ENCODE measurements at regions of chr17 and their contacts with region 1.

Region 1: GRCh38 chr17:927611-928461 is 51.7 kb downstream of the NXN start:
- DNase-seq: no peak
- H3K4me3 ChIP-seq: 0 out of 8 replicates have a peak overlapping the region, but pooled peaks of 1 of the 4 experiments have one; percentile 1
- H3K27ac ChIP-seq: peak overlapping the region; percentile 25; the same call in 1 of the 2 replicates
- H3K4me1 ChIP-seq: peaks cover 10 to 22% (median 17%) of the 10 kb centered on the region in 4 experiments
- H3K27me3 ChIP-seq: no peaks in the 10 kb centered on the region
- CTCF ChIP-seq: no peak
- EP300 ChIP-seq: no peak
- POLR2A ChIP-seq: no peak
- RAD21 ChIP-seq: no peak

Region 2: GRCh38 chr17:860805-861204 is 67.0 kb before region 1 on chr17:
- CTCF ChIA-PET with region 1: no interaction called
- POLR2A ChIA-PET with region 1: no interaction called
- DNase-seq: no peak
- H3K4me3 ChIP-seq: no peak overlapping the region
- H3K27ac ChIP-seq: no peak overlapping the region
- H3K4me1 ChIP-seq: no peaks in the 10 kb centered on the region; a peak in 1 of 7 replicates
- H3K27me3 ChIP-seq: no peaks in the 10 kb centered on the region
- CTCF ChIP-seq: no peak
- EP300 ChIP-seq: no peak
- POLR2A ChIP-seq: no peak
- RAD21 ChIP-seq: no peak

Region 3: GRCh38 chr17:915538-916201 is 12.2 kb before region 1 on chr17:
- CTCF ChIA-PET with region 1: interaction called, 22 read pairs
- POLR2A ChIA-PET with region 1: interaction called, 3 read pairs
- DNase-seq: no peak
- H3K4me3 ChIP-seq: no peak overlapping the region
- H3K27ac ChIP-seq: no peak overlapping the region
- H3K4me1 ChIP-seq: peaks cover 2 to 15% (median 4%) of the 10 kb centered on the region in 4 experiments; a peak in 5 of 7 replicates
- H3K27me3 ChIP-seq: no peaks in the 10 kb centered on the region
- CTCF ChIP-seq: no peak
- EP300 ChIP-seq: no peak
- POLR2A ChIP-seq: no peak
- RAD21 ChIP-seq: no peak

Region 4: DNA sequence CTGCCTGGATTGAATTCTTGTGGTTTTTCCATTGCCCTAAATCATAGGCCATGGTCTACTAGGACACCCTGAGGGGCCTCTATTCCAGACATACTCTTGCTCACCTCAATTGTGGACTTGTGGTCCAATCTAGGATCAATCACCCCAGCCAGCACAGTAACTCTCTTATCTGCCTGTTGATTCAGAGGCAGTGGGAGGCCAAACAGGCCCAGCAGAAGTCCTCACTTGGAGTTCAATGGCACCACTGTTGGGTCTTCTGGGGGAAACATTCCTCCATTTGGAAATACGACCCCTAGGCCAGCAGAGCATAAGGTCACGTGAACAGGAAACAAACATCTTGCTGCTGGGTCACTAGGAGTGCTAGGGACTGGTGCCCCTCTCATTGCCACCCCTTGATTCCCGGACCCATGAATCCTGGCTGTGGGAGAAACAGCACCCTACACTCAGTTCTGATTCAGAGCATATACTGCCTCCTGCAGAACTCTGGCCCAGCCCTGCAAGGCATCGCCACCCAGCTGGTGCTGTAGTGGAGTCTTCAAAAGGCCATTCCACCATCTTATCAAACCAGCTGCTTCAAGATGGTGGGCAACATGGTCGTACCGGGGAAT is 58.6 kb after region 1 on chr17:
- CTCF ChIA-PET with region 1: no interaction called
- POLR2A ChIA-PET with region 1: no interaction called
- DNase-seq: no peak
- H3K4me3 ChIP-seq: no peak overlapping the region
- H3K27ac ChIP-seq: no peak overlapping the region
- H3K4me1 ChIP-seq: no peaks in the 10 kb centered on the region
- H3K27me3 ChIP-seq: no peaks in the 10 kb centered on the region
- CTCF ChIP-seq: no peak
- EP300 ChIP-seq: no peak
- POLR2A ChIP-seq: no peak
- RAD21 ChIP-seq: no peak

Region 5: DNA sequence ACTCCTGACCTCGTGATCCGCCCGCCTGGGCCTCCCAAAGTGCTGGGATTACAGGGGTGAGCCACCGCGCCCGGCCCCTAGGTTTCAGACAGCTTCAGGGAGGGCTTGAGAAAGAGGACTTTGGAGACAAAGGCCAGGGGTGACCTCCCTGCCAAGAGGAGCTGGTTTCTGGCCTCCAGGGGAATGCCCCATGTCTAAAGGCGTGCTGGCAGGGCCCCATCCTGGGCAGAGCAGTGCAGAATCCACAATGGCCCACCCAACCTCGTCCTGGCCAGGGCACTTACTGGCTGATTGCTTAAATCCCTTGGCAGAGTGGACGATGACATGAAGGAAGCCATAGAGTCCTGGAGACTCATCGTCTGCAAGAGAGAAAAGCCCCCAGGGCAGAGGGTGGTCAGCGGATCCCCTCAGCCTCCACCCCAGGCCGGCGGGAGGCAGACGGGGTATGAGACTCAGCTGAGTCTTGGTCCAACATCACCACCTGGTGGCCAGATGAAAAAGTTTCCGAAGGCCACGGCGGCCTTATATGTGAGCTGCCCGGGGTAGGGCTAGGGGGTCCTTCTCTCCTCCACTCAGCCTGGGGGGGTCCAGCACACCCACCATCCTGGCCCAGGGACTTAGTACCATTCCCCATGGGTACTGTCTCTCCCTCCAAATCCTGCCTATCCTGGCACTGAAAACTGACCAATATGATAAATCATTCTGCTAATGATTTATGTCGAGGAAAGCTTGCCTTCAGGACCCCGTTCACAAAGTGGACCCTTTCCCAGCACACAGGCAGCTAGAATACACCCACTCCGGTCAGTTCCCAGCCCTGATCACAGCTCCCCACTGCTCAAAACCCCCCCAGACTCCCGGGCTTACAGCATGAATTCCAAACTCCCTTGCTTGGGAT is 128.2 kb after region 1 on chr17:
- CTCF ChIA-PET with region 1: no interaction called
- POLR2A ChIA-PET with region 1: no interaction called
- DNase-seq: peak in 1 of 2 experiments; percentile 87
- H3K4me3 ChIP-seq: no peak overlapping the region
- H3K27ac ChIP-seq: no peak overlapping the region
- H3K4me1 ChIP-seq: no peaks in the 10 kb centered on the region
- H3K27me3 ChIP-seq: no peaks in the 10 kb centered on the region
- CTCF ChIP-seq: peak; percentile 76 to 81 (median 77)
- EP300 ChIP-seq: no peak
- POLR2A ChIP-seq: no peak
- RAD21 ChIP-seq: peak; percentile 85 to 86

Measured in H1 (cell line).